ENCODE measurements at regions of chr11 and their contacts with region 1.

Region 1: DNA sequence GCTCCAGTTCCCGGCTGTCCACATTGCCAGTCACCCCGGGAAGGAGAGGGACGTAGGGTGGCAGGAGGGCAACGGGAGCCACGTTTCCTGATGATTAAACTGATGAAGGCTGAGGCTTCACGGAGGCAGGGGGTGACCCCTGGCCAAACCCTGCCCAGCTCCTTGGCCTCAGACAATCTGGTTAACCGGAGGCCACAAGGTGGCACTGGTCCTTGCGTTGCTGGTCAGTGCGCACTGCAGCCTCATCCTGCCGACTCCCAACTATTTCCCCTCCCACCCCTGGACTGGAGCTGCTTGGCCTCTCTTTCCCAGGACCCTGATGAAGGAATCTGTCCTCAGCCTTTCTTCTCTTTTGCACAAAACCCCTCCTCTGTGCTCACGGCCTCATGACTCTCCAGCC is 75.3 kb downstream of the PDE2A start:
- DNase-seq: peak; percentile 83
- H3K4me3 ChIP-seq: no peak overlapping the region
- H3K27ac ChIP-seq: no peak overlapping the region
- H3K4me1 ChIP-seq: peaks cover 0 to 20% of the 10 kb centered on the region in 2 experiments; a peak in 1 of 4 replicates
- H3K27me3 ChIP-seq: peaks cover 11% of the 10 kb centered on the region; the same call in 1 of the 2 replicates
- CTCF ChIP-seq: peak; percentile 46
- EP300 ChIP-seq: no peak
- RAD21 ChIP-seq: peak; percentile 74

Region 2: DNA sequence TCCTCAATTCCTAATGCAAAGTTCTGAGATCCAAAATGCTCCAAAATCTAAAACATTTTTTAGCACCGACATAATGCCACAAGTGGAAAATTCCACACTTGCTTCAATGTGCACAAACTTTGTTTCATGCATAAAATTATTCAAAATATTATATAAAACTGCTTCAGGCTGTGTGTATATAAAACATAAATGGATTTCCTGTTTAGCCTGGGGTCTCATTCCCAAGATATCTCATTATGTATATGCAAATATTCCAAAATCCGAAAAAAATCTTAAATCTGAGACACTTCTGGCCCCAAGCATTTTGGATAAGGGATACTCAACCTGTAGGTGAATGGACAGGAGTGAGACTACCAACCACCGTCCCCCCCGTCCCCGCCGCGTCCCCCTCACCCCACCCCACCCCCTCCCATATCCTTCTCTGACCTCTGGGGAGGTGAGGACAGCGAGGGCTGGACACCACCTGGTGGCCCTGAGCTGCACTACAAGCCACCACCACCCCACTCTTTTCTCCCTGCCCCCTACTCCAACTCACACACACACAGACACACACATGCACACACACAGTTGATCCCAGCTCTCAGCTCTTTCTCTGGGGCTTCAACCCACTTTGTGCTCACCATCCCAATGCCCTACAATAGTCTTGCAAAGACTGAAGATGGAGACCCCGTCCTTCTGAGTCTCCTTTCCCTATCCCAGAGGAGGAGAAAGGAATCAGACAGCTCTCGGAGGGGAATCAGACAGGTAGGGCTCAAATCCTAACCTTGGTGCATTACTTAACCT is 25.6 kb before region 1 on chr11:
- CTCF ChIA-PET with region 1: interaction called, 11 read pairs
- POLR2A ChIA-PET with region 1: no interaction called
- DNase-seq: peak; percentile 92
- H3K4me3 ChIP-seq: no peak overlapping the region
- H3K27ac ChIP-seq: no peak overlapping the region
- H3K4me1 ChIP-seq: no peaks in the 10 kb centered on the region; a peak in 3 of 4 replicates
- H3K27me3 ChIP-seq: no peaks in the 10 kb centered on the region
- CTCF ChIP-seq: peak; percentile 64
- EP300 ChIP-seq: no peak
- RAD21 ChIP-seq: peak; percentile 78

Region 3: GRCh38 chr11:72609045-72609444 is 10.1 kb after region 1 on chr11:
- CTCF ChIA-PET with region 1: interaction called, 33 read pairs
- POLR2A ChIA-PET with region 1: no interaction called
- DNase-seq: no peak
- H3K4me3 ChIP-seq: no peak overlapping the region
- H3K27ac ChIP-seq: no peak overlapping the region
- H3K4me1 ChIP-seq: peaks cover 0 to 12% of the 10 kb centered on the region in 2 experiments; a peak in 1 of 4 replicates
- H3K27me3 ChIP-seq: peaks cover 8% of the 10 kb centered on the region; the same call in 1 of the 2 replicates
- CTCF ChIP-seq: peak; percentile 64
- EP300 ChIP-seq: no peak
- RAD21 ChIP-seq: peak; percentile 38

Region 4: GRCh38 chr11:72631806-72632731 is 33.2 kb after region 1 on chr11:
- CTCF ChIA-PET with region 1: interaction called, 39 read pairs
- POLR2A ChIA-PET with region 1: interaction called, 3 read pairs
- DNase-seq: peak; percentile 80
- H3K4me3 ChIP-seq: no peak overlapping the region
- H3K27ac ChIP-seq: peak overlapping the region in 1 of 2 experiments; percentile 88; a peak in 2 of 4 replicates
- H3K4me1 ChIP-seq: peaks cover 0 to 94% of the 10 kb centered on the region in 2 experiments; a peak in 2 of 4 replicates
- H3K27me3 ChIP-seq: no peaks in the 10 kb centered on the region; the same call in 1 of the 2 replicates
- CTCF ChIP-seq: no peak
- EP300 ChIP-seq: peak in 1 of 2 experiments; percentile 56; a peak in 1 of 4 replicates
- RAD21 ChIP-seq: peak; percentile 3; the same call in 1 of the 2 replicates

Region 5: GRCh38 chr11:72668611-72669347 is 69.9 kb after region 1 on chr11:
- CTCF ChIA-PET with region 1: interaction called, 15 read pairs
- POLR2A ChIA-PET with region 1: no interaction called
- DNase-seq: no peak
- H3K4me3 ChIP-seq: no peak overlapping the region
- H3K27ac ChIP-seq: no peak overlapping the region
- H3K4me1 ChIP-seq: peaks cover 0 to 10% of the 10 kb centered on the region in 2 experiments; a peak in 1 of 4 replicates
- H3K27me3 ChIP-seq: peaks cover 13% of the 10 kb centered on the region; the same call in 1 of the 2 replicates
- CTCF ChIP-seq: no peak
- EP300 ChIP-seq: no peak
- RAD21 ChIP-seq: no peak

Measured in SK-N-SH (cell line).